Right ventricle myocardium inferior (tissue), 1 donor: ENCODE measurements at regions of chr14 and their contacts with region 1.

Region 1: DNA sequence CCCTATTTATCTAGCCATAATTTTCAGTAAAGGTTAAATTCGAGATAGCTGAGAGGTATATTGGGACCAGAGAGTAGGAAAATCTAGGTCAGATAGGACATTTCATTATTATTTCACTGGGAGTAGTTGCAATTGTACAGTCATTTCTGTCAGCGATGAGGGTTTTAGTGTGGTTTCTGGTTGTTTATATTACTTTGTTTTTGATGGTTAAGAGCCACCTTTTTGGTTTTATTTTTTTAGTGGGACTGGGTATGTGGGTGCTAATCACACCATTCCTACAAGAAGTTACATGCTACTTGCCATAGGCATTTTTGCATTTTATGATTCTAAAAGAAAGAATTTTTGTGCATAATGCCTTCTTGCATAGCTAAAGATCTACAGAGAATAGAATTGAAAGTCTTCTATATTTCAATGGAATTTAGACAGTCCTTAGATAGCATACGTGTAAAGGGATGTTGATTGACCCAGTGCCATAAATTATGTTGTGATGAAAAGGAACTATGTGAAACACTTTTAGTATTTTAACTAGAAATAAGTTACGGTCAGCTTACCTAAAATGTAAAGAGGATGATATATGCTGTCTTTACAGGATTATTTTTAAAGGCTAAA is 85.2 kb downstream of the KTN1 start:
- DNase-seq: no peak
- ATAC-seq: no peak

Region 2: GRCh38 chr14:55446218-55446654 is 218.9 kb before region 1 on chr14:
- intact Hi-C with region 1: loop called (anchors 10 kb)
- DNase-seq: no peak
- ATAC-seq: peak; percentile 73

Region 3: DNA sequence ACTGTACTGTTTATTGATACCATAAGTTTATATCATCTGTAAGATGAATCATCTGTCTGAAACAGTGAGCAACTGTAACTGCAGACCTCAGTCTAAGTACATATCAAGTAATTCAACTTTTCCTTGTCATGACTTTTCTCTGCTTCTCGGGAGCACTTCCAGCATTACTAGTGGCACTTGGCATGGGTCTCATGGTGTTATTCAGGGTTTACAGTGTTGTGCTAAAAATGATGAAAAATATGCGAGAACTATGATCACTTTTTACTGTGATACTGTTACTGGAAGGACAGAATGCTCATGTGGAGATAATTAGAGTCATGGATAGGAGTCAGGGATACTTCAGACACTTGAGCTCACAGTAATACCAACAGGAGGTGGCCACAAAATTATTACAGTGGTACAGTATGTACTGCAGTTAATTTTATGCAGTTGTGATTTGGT is 76.9 kb before region 1 on chr14:
- intact Hi-C with region 1: loop called (anchors 5 kb)
- DNase-seq: no peak
- ATAC-seq: peak; percentile 82